ENCODE measurements at regions of chr5 and their contacts with region 1.

Region 1: GRCh38 chr5:121976979-121977378 is 15.2 kb downstream of the SRFBP1 start:
- DNase-seq: no peak

Region 2: DNA sequence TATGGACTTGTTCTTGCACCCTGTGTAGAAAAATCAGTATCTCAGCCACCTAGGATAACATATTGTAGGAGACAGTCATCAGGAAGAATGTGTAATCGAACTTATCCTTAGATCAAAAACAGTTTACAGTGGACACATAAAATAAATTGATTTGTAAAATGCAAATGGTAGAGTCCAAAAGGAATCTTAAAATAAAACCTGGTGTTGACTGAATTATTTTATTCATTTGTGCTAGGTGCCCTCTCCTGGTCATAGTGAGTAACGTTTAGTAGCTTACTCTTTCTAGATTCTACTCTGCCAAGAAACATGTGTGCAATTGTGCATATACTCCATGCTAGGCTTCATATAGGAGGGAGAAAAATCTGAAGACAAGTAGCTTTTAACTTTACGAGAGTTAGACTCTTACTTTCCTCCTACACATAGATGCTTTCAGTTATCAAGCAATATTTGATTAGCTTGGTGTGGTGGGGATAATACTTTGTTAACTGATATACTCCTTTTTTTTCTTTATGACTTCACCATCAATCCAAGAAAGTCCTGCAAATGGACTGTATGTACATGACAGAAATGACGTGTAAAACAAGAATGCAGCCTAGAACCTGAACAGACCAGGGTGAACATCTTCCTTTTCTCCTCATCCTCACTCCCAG is 124.8 kb after region 1 on chr5:
- intact Hi-C with region 1: no loop called
- DNase-seq: peak in 2 of 42 donors; percentile 25 to 30

Region 3: DNA sequence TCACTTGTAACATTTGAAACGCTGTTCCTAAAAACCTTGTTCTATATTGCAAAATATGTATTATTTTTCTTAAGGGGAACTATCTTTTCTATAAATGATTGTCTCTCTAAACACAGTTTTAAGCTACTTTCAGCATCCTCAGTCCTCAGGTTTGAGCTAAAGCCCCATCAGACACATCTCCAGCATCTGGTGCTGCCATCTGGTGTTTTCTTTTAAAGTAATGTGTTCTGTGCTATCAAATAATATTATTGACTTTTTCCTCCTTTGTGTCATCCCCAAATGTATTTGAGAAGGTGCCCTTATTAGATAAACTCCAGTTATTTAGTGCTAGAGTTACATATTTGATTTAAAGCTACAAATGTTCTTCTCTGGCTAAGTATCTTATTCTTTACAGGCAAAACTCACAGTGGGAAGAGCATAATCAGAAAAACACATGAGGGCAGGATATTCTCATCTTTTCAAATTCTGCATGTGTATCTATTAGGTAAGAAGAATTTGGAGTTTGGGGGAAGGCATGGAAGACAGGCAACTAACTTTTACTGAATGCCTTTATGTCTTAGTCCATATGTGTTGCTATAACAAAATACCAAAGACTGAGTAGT is 179.8 kb after region 1 on chr5:
- intact Hi-C with region 1: loop called (anchors 10 kb)
- DNase-seq: peak in 12 of 42 donors; percentile 6 to 52 (median 24)

Measured in head of caudate nucleus (tissue), 42 donors.